ENCODE measurements at regions of chr1 and their contacts with region 1.

Region 1: GRCh38 chr1:146019231-146020057 is 2.1 kb downstream of the HJV start:
- DNase-seq: no peak
- H3K4me3 ChIP-seq: peak overlapping the region in 57 of 59 donors; percentile 7 to 62 (median 42)
- H3K27ac ChIP-seq: no peak overlapping the region
- H3K27me3 ChIP-seq: peaks cover 0 to 48% (median 19%) of the 10 kb centered on the region in 45 donors
- CTCF ChIP-seq: no peak

Region 2: GRCh38 chr1:145795257-145795881 is 224.1 kb before region 1 on chr1:
- intact Hi-C with region 1: no loop called
- DNase-seq: no peak
- H3K4me3 ChIP-seq: no peak overlapping the region
- H3K27ac ChIP-seq: no peak overlapping the region
- H3K27me3 ChIP-seq: no peaks in the 10 kb centered on the region
- CTCF ChIP-seq: no peak

Region 3: DNA sequence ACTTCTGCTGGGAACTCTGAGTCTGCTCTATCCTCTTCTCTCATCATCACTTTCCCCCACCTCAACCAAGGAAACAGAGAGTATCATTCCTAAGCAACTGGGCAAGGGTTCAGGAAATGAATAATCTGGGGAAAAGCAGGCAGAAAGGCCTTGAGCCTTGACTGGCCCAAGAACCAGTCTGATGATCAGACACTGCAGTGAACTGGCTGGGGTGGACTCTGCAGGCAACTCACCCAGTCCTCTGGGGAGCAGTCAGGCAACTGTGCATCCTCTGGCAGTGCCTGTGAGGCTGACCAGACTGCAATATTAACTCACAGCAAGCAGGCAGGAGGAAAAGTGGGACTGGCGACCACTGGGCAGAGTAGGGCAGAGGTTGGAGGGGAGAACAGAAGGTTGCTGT is 134.8 kb before region 1 on chr1:
- intact Hi-C with region 1: no loop called
- DNase-seq: no peak
- H3K4me3 ChIP-seq: peak overlapping the region in 37 of 59 donors; percentile 62 to 89 (median 80)
- H3K27ac ChIP-seq: no peak overlapping the region
- H3K27me3 ChIP-seq: no peaks in the 10 kb centered on the region
- CTCF ChIP-seq: no peak

Region 4: DNA sequence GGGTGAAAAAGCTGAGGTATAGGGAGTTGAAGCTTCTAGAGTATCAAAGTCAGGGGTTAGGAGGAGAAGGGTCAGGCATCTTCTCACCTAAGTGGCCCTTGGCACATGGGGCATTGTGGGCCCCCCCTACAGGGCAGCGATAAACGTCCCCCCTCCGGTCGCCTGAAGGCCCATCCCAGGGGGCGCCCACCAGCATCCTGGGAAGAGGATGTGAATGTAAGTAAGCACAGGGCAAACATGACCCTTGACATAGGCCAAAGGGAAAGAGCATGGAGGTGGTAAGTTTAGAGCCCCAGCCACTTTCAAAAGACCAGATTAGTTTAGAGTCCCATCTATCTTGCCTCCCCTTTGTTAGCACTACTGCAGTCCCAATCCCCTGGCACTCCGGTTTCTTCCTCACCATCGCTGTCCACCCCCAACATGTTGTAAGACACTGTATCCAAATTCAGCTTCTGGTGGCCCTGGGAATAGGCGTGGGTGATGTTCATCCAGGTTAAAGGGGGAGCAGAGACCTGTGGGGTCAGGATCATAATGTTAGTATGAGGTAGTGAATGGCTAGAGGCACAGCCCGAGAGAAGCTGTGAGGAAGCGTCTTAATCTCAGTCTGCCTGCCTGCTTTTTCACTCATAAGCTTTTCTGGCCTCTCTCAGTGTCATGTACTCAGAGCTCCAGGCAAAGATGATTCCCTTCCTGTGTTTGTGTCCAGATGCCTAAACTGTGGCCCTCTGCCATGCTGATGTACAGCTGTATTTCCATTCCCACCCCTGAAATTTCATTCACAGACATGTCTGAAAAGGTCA is 112.3 kb before region 1 on chr1:
- intact Hi-C with region 1: loop called in 1 of 2 experiments (anchors 5 kb)
- DNase-seq: no peak
- H3K4me3 ChIP-seq: no peak overlapping the region
- H3K27ac ChIP-seq: peak overlapping the region in 1 of 59 donors; percentile 31
- H3K27me3 ChIP-seq: no peaks in the 10 kb centered on the region
- CTCF ChIP-seq: no peak

Measured in dorsolateral prefrontal cortex (tissue), 120 donors.